Naive thymus-derived CD4-positive, alpha-beta T cell (primary cell): ENCODE measurements at regions of chr3 and their contacts with region 1.

Region 1: GRCh38 chr3:66276705-66277274 is 56.0 kb downstream of the SLC25A26 start:
- DNase-seq: peak; percentile 19 to 68 (median 56)
- ATAC-seq: peak; percentile 81
- H3K4me3 ChIP-seq: no peak overlapping the region
- H3K4me3 Mint-ChIP-seq: no peak overlapping the region
- H3K27ac ChIP-seq: no peak overlapping the region
- H3K27ac Mint-ChIP-seq: peak overlapping the region in 5 of 9 donors; percentile 9 to 61 (median 24)
- H3K4me1 ChIP-seq: peaks cover 12 to 28% of the 10 kb centered on the region in 2 donors
- H3K4me1 Mint-ChIP-seq: peaks cover 15 to 37% (median 34%) of the 10 kb centered on the region in 7 donors
- H3K27me3 ChIP-seq: no peaks in the 10 kb centered on the region
- H3K27me3 Mint-ChIP-seq: no peaks in the 10 kb centered on the region

Region 2: DNA sequence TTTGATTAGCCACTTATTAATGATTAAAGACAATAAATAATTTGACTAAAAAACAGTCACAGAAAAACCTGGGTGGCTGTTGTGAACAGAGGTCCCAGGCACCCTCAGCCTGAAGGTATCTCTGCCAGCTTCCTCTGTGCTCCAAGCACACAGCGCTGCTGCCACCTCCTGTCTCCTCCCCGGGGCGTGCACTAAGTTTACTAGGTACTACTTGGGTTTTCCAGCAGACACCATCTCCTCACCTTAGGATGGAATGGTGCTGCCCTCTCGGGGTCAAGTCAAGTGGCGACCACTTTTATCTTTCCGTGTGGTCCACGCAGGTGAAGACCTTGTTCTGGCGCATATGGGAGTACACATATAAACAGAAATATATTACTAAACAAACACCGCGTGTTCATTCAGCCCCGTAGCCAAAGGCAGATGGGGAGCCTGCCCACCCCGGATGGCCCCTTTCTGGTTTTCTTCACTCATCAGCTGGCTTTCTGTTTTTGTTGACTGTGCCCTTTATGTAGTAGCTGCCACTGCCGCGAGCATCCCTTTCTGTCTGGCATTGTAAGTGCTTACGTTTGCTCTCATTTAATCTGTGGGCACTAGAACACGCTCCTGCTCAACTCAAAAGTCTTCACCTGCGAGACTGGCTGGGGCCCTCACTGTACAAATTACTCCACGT is 96.0 kb after region 1 on chr3:
- CTCF ChIA-PET with region 1: interaction called, 14 read pairs
- POLR2A ChIA-PET with region 1: no interaction called
- intact Hi-C with region 1: loop called (anchors 1 kb)
- DNase-seq: peak in 2 of 9 donors; percentile 9 to 15
- ATAC-seq: peak; percentile 60
- H3K4me3 ChIP-seq: no peak overlapping the region
- H3K4me3 Mint-ChIP-seq: no peak overlapping the region
- H3K27ac ChIP-seq: no peak overlapping the region
- H3K27ac Mint-ChIP-seq: peak overlapping the region in 4 of 9 donors; percentile 10 to 63 (median 37)
- H3K4me1 ChIP-seq: peaks cover 3 to 13% of the 10 kb centered on the region in 2 donors
- H3K4me1 Mint-ChIP-seq: peaks cover 2 to 13% (median 2%) of the 10 kb centered on the region in 7 donors
- H3K27me3 ChIP-seq: no peaks in the 10 kb centered on the region
- H3K27me3 Mint-ChIP-seq: no peaks in the 10 kb centered on the region

Region 3: DNA sequence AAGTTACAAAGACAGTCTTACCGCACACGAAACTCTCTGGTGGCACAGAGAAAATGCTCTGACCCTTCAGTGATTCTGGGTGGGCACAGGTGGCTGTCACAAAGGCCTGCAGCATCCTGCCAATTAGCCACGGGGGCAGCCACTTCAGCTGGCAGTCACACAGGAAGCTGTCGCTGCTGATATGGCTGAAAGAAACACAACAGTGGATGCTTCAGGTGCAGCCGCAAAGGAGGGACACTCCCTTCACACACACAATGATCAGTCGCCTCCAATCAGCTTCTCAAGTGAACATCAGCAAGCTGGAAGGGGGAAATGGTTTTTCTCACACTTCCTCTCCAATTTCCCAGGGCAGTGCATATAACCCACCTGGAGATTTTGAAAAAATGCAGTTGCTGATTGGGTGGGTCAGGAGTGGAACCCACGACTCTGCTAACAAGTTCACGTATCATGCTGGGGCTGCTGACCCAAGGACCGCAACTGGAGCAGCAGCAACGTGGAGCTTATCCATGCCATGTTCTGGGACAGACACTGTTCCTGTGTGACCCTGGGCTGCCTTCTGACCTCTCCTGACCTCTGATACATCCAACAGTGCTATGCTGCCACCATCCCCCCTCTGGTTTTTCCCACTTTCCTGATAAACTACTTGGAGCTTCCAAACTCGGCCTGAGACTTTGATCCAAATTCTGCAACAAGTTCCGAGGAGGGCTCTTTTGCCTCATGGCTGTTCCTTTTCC is 117.4 kb after region 1 on chr3:
- CTCF ChIA-PET with region 1: no interaction called
- POLR2A ChIA-PET with region 1: interaction called, 4 read pairs
- intact Hi-C with region 1: loop called (anchors 1 to 5 kb)
- DNase-seq: peak in 8 of 9 donors; percentile 19 to 74 (median 64)
- ATAC-seq: peak; percentile 96
- H3K4me3 ChIP-seq: peak overlapping the region; percentile 45
- H3K4me3 Mint-ChIP-seq: peak overlapping the region; percentile 73 to 97 (median 87)
- H3K27ac ChIP-seq: peak overlapping the region; percentile 48
- H3K27ac Mint-ChIP-seq: peak overlapping the region; percentile 82 to 98 (median 95)
- H3K4me1 ChIP-seq: peaks cover 20 to 47% of the 10 kb centered on the region in 2 donors
- H3K4me1 Mint-ChIP-seq: peaks cover 26 to 62% (median 61%) of the 10 kb centered on the region in 7 donors
- H3K27me3 ChIP-seq: no peaks in the 10 kb centered on the region
- H3K27me3 Mint-ChIP-seq: no peaks in the 10 kb centered on the region

Region 4: GRCh38 chr3:66789580-66790237 is 512.9 kb after region 1 on chr3:
- CTCF ChIA-PET with region 1: no interaction called
- POLR2A ChIA-PET with region 1: no interaction called
- intact Hi-C with region 1: no loop called
- DNase-seq: no peak
- ATAC-seq: no peak
- H3K4me3 ChIP-seq: no peak overlapping the region
- H3K4me3 Mint-ChIP-seq: no peak overlapping the region
- H3K27ac ChIP-seq: no peak overlapping the region
- H3K27ac Mint-ChIP-seq: no peak overlapping the region
- H3K4me1 ChIP-seq: no peaks in the 10 kb centered on the region
- H3K4me1 Mint-ChIP-seq: no peaks in the 10 kb centered on the region
- H3K27me3 ChIP-seq: no peaks in the 10 kb centered on the region
- H3K27me3 Mint-ChIP-seq: peaks cover 0 to 8% (median 0%) of the 10 kb centered on the region in 5 donors

Region 5: GRCh38 chr3:66816090-66816761 is 539.4 kb after region 1 on chr3:
- CTCF ChIA-PET with region 1: interaction called, 39 read pairs
- POLR2A ChIA-PET with region 1: no interaction called
- intact Hi-C with region 1: loop called (anchors 1 kb)
- DNase-seq: peak in 6 of 9 donors; percentile 39 to 64 (median 62)
- ATAC-seq: peak; percentile 85
- H3K4me3 ChIP-seq: no peak overlapping the region
- H3K4me3 Mint-ChIP-seq: no peak overlapping the region
- H3K27ac ChIP-seq: no peak overlapping the region
- H3K27ac Mint-ChIP-seq: no peak overlapping the region
- H3K4me1 ChIP-seq: no peaks in the 10 kb centered on the region
- H3K4me1 Mint-ChIP-seq: peaks cover 0 to 2% (median 0%) of the 10 kb centered on the region in 7 donors
- H3K27me3 ChIP-seq: no peaks in the 10 kb centered on the region
- H3K27me3 Mint-ChIP-seq: peaks cover 0 to 22% (median 3%) of the 10 kb centered on the region in 5 donors

Region 6: DNA sequence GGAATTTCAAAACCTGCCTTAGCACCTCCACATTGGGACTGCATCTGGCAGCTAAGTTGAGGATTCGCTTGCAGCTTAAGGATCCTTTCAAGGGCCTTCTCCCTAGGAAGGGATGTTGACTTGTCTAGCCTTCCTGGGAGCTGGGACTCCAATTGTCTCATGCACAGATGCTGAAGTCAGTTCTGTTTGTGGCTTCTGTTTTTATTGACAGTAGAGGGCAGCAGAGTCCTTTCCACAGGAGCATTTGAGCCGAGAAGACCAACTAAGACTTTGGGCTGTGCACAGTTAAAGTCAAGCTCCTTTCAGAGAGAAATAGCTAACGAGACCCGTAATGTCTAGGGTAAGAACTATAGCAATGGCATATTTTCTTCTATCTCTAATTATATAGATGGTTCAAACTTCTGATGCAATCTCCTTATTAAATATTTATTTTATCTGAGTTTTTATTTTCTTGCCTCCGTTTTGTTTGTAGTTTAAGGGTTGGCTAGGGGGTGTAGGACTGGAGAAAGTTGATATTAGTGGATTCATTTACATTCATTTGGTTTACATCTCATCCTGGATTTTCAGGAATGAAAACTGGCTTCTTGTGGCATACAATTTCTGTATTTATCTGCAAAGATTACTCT is 661.7 kb after region 1 on chr3:
- CTCF ChIA-PET with region 1: no interaction called
- POLR2A ChIA-PET with region 1: no interaction called
- intact Hi-C with region 1: loop called in 1 of 2 experiments (anchors 2 kb)
- DNase-seq: peak in 7 of 9 donors; percentile 10 to 46 (median 38)
- ATAC-seq: peak; percentile 54
- H3K4me3 ChIP-seq: no peak overlapping the region
- H3K4me3 Mint-ChIP-seq: no peak overlapping the region
- H3K27ac ChIP-seq: no peak overlapping the region
- H3K27ac Mint-ChIP-seq: no peak overlapping the region
- H3K4me1 ChIP-seq: no peaks in the 10 kb centered on the region
- H3K4me1 Mint-ChIP-seq: no peaks in the 10 kb centered on the region
- H3K27me3 ChIP-seq: no peaks in the 10 kb centered on the region
- H3K27me3 Mint-ChIP-seq: peaks cover 7 to 35% (median 22%) of the 10 kb centered on the region in 5 donors